Activated naive CD4-positive, alpha-beta T cell treated with anti-CD3 and anti-CD28 coated beads, Interleukin-2, amount 10 ng/mL, durations not matched to agents 7 days and 5 days (primary cell): ENCODE measurements at regions of chr5 and their contacts with region 1.

Region 1: GRCh38 chr5:170333161-170333910 is 35.8 kb upstream of the LCP2 start:
- DNase-seq: peak; percentile 73
- H3K4me3 Mint-ChIP-seq: peak overlapping the region; percentile 60
- H3K27ac Mint-ChIP-seq: peak overlapping the region; percentile 89
- H3K4me1 Mint-ChIP-seq: peaks cover 28% of the 10 kb centered on the region
- H3K27me3 Mint-ChIP-seq: peaks cover 5% of the 10 kb centered on the region

Region 2: DNA sequence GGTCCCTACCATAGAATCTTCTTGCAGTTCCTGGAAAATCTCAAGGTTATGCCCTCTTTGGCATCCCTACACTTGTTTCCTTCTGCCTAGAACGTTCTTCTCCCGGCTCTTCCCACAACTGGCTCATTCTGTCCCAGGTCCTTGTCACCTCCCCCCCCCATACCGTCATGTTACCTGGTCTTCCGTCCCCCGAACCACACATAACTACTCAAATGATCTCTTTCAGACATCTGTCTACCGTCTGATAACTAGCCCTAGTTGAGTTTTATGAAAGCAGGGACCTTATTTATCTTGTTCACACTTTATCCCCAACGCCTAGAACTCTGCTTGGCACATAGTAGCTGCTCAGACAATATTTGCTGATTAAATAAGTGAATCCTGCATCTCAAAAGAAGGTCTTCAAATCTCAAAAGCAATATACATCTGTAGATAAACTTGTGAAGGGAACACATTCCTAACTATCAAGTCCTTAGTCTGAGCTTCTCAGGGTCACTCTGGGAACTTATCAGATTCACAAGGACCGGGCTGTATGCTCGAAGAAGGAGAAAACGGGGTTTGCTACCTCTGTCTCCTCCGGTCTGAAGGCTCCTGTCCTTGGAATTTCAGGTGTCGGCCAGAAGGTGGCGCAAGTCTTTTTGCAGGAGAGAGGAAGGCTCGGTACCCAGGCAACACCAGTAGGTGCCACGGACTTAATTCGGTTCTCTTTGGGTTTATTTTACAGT is 65.7 kb before region 1 on chr5:
- CTCF ChIA-PET with region 1: interaction called, 132 read pairs
- DNase-seq: peak; percentile 87
- H3K4me3 Mint-ChIP-seq: peak overlapping the region; percentile 40
- H3K27ac Mint-ChIP-seq: peak overlapping the region; percentile 87
- H3K4me1 Mint-ChIP-seq: peaks cover 92% of the 10 kb centered on the region
- H3K27me3 Mint-ChIP-seq: no peaks in the 10 kb centered on the region

Region 3: GRCh38 chr5:170278611-170279452 is 54.5 kb before region 1 on chr5:
- CTCF ChIA-PET with region 1: interaction called, 109 read pairs
- DNase-seq: peak; percentile 93
- H3K4me3 Mint-ChIP-seq: peak overlapping the region; percentile 66
- H3K27ac Mint-ChIP-seq: peak overlapping the region; percentile 97
- H3K4me1 Mint-ChIP-seq: peaks cover 97% of the 10 kb centered on the region
- H3K27me3 Mint-ChIP-seq: no peaks in the 10 kb centered on the region

Region 4: DNA sequence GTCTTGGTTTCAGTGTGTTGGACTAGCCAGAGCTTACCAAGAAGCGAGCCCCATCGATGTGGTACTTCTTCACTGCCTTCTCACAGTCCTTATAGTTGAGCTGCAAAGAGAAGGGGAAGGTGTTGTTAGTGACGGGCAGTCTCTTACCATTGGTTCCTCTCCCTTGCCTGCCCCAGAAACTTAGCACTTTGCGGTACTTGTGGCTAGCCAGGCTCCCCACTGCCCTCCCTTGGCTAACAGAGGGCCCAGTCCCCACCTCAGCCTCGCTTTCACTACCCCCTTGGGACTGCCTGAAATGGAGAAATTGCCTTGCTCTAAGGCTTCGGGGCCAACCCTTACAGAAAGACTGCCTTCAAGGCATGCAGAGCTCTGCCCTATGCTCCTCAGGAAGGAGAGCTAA is 40.1 kb before region 1 on chr5:
- CTCF ChIA-PET with region 1: interaction called, 103 read pairs
- DNase-seq: peak; percentile 68
- H3K4me3 Mint-ChIP-seq: peak overlapping the region; percentile 100
- H3K27ac Mint-ChIP-seq: peak overlapping the region; percentile 79
- H3K4me1 Mint-ChIP-seq: peaks cover 70% of the 10 kb centered on the region
- H3K27me3 Mint-ChIP-seq: no peaks in the 10 kb centered on the region

Region 5: DNA sequence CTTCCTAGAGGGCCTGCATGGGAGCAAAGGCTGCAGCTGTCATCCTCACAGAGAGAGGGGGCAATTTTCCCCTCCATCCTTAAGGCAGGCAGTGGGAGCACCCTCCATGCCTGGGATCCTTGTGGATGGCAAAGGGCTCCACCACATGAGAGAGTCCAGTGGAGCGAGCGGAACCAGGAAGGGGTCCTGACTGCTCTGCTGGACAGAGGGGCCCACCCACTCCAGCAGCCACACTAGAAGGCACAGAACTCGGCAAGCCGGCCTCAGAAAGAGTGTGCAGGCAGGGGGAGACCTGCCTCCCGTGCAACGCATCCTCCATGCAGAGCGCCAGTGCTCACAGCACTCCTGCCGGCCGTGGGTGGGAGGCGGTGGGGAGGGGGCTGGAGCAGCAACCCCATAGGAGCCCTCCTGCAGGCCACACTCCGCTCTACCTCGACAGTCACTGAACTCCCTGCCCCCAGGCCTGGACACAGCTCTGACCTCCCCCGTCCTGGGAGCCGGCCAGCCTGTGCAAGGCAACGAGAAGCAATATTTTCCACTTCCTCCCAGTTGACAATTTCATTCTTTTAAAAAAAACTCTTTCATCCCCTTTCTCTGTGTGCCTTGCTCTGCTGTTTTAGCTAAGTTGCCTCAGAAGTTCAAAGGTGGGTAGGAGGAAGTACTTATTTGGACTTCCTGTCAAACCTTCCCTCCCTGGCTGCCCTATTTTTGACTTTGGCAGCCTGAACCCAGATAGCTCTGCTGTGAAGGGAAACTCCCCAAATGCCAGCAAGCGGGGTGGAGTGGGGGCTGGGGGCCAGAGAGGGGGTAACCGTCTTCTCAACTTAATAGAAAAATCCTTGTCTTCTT is 30.5 kb before region 1 on chr5:
- CTCF ChIA-PET with region 1: interaction called, 103 read pairs
- DNase-seq: peak; percentile 83
- H3K4me3 Mint-ChIP-seq: peak overlapping the region; percentile 75
- H3K27ac Mint-ChIP-seq: peak overlapping the region; percentile 94
- H3K4me1 Mint-ChIP-seq: peaks cover 85% of the 10 kb centered on the region
- H3K27me3 Mint-ChIP-seq: no peaks in the 10 kb centered on the region

Region 6: GRCh38 chr5:170312666-170313065 is 20.7 kb before region 1 on chr5:
- CTCF ChIA-PET with region 1: interaction called, 17 read pairs
- DNase-seq: peak; percentile 53
- H3K4me3 Mint-ChIP-seq: peak overlapping the region; percentile 39
- H3K27ac Mint-ChIP-seq: peak overlapping the region; percentile 86
- H3K4me1 Mint-ChIP-seq: peaks cover 44% of the 10 kb centered on the region
- H3K27me3 Mint-ChIP-seq: peaks cover 7% of the 10 kb centered on the region

Region 7: DNA sequence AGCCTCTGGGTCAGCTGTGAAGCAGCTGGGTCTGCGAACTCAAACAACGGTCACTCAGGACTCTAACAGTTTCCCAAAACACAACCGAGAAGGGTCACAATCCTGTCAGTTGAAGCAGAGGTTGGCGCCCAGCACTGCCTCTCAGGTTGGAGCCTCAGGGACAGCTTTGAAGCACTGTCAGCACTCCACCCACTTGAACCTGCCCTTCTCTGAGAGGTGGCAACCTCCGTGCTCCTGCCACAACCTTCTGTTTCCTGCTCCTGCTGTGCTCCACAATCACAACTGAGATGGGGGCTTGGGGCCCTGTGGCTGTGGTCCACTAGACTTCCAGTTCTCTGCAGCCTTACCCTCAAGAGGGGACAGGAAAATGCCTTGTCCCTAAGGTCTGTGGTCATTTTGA is 14.0 kb before region 1 on chr5:
- CTCF ChIA-PET with region 1: interaction called, 17 read pairs
- DNase-seq: no peak
- H3K4me3 Mint-ChIP-seq: no peak overlapping the region
- H3K27ac Mint-ChIP-seq: no peak overlapping the region
- H3K4me1 Mint-ChIP-seq: peaks cover 17% of the 10 kb centered on the region
- H3K27me3 Mint-ChIP-seq: peaks cover 24% of the 10 kb centered on the region

Region 8: GRCh38 chr5:170355601-170356098 is 22.3 kb after region 1 on chr5:
- CTCF ChIA-PET with region 1: no interaction called
- DNase-seq: no peak
- H3K4me3 Mint-ChIP-seq: no peak overlapping the region
- H3K27ac Mint-ChIP-seq: no peak overlapping the region
- H3K4me1 Mint-ChIP-seq: no peaks in the 10 kb centered on the region
- H3K27me3 Mint-ChIP-seq: peaks cover 68% of the 10 kb centered on the region

Region 9: GRCh38 chr5:170393235-170393634 is 59.9 kb after region 1 on chr5:
- CTCF ChIA-PET with region 1: no interaction called
- DNase-seq: peak; percentile 56
- H3K4me3 Mint-ChIP-seq: peak overlapping the region; percentile 4
- H3K27ac Mint-ChIP-seq: peak overlapping the region; percentile 64
- H3K4me1 Mint-ChIP-seq: peaks cover 38% of the 10 kb centered on the region
- H3K27me3 Mint-ChIP-seq: peaks cover 38% of the 10 kb centered on the region